Activated naive CD4-positive, alpha-beta T cell treated with anti-CD3 and anti-CD28 coated beads for 36 hours (primary cell): ENCODE measurements at regions of chr12 and their contacts with region 1.

Region 1: DNA sequence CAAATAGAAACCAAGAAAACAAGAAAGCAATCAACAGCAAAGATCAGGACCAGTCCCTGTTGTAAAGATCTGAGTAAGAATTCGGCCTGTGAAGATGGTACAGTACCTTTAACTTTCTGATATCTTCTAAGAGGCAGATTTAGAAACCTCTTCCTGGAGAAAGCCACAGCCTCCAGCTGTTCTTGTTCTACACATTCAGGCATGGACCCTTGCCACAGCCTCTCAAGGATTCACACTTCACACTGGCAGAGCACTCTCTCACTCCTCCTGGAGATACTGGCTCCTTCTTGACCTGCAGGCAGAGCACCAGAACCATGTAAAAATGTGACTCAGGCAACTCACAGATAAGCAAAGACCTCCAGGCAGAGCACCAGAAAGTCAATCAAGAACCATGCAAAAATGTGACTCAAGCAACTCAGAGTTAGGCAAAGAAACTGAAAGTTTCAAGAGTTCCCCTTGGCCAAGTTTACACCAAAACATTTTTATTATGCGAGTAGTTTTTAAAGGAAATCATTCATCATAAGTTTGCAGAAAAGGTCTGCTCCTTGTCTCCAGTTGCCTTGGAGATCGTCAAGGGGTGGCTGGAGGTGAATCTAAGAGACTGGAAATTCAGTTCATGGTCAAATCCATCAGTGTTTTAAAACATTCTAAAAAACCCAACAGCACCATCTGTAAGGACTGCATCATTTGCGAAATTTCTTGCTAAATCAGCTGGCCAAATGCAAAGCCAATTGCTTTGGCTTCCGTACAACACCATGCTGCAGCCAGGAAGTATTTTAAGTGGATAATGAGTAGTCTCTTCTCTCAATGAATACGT is 119.3 kb upstream of the MDM1 start:
- DNase-seq: peak; percentile 71
- H3K4me3 Mint-ChIP-seq: peak overlapping the region; percentile 45
- H3K27ac Mint-ChIP-seq: peak overlapping the region; percentile 96
- H3K4me1 Mint-ChIP-seq: peaks cover 91% of the 10 kb centered on the region
- H3K27me3 Mint-ChIP-seq: no peaks in the 10 kb centered on the region

Region 2: DNA sequence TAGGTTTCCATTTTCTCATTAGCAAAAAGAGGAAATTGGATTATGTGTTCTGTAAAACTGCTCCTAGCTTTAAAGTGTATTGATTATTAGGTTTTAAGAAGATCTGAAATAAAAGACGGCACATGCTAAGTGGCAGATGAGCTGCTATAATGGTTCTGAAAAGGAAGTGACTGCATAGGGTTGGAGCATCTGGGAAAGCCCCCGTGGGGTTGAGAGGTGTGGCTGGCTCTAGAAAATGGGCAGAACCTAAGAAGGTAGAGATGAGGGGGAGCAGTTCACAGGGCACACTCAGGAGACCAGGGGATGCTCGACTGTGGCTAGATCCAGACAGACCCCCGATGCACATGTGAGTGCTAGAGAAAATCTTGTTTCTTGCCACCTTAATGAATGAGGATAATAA is 460.3 kb before region 1 on chr12:
- CTCF ChIA-PET with region 1: no interaction called
- intact Hi-C with region 1: loop called (anchors 1 kb)
- DNase-seq: peak; percentile 74
- H3K4me3 Mint-ChIP-seq: peak overlapping the region; percentile 55
- H3K27ac Mint-ChIP-seq: peak overlapping the region; percentile 80
- H3K4me1 Mint-ChIP-seq: peaks cover 49% of the 10 kb centered on the region
- H3K27me3 Mint-ChIP-seq: peaks cover 2% of the 10 kb centered on the region

Region 3: DNA sequence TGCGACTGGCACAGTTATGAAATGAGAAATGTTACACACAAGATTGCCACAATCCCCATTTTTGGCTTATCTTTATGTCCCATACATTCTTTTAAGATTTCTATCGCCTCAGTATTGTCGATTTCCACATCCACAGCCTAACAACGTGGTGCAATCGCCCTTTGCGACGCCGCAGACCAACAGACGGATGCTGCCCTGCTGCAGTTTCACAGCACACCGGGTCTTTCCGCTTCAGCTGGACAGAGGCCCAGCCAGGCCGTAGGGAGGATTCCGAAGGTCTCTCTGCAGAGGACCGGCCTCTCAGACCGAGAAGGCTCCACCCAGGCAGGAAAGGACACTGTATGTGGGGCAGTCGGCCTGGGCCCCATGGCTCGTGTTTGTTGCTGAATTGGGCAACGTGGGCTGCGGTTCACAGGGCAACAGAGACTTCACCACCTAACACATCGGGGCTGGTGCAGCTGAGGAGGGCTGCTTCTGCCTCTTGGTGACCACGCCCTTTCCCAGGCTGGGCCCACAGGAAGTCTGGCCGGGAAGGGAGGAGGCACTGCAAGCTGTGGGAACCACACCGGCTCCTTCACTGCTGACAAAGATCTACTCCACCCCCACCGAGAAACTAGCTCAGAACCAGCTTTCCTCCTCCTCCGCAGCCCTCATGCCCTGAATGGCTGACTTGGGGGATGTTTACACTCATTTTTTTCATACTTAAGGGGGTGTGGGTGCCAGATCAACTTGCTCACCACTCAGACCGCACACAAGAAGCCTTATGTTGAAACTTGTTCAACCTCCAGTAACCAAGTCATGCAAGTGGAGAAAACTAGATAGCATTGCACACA is 86.4 kb before region 1 on chr12:
- CTCF ChIA-PET with region 1: no interaction called
- intact Hi-C with region 1: loop called (anchors 1 kb)
- DNase-seq: peak; percentile 90
- H3K4me3 Mint-ChIP-seq: peak overlapping the region; percentile 79
- H3K27ac Mint-ChIP-seq: peak overlapping the region; percentile 90
- H3K4me1 Mint-ChIP-seq: peaks cover 57% of the 10 kb centered on the region
- H3K27me3 Mint-ChIP-seq: no peaks in the 10 kb centered on the region

Region 4: GRCh38 chr12:68538726-68539614 is 87.5 kb after region 1 on chr12:
- CTCF ChIA-PET with region 1: interaction called, 3 read pairs
- intact Hi-C with region 1: loop called (anchors 1 kb)
- DNase-seq: peak; percentile 73
- H3K4me3 Mint-ChIP-seq: peak overlapping the region; percentile 56
- H3K27ac Mint-ChIP-seq: peak overlapping the region; percentile 79
- H3K4me1 Mint-ChIP-seq: peaks cover 53% of the 10 kb centered on the region
- H3K27me3 Mint-ChIP-seq: no peaks in the 10 kb centered on the region

Region 5: DNA sequence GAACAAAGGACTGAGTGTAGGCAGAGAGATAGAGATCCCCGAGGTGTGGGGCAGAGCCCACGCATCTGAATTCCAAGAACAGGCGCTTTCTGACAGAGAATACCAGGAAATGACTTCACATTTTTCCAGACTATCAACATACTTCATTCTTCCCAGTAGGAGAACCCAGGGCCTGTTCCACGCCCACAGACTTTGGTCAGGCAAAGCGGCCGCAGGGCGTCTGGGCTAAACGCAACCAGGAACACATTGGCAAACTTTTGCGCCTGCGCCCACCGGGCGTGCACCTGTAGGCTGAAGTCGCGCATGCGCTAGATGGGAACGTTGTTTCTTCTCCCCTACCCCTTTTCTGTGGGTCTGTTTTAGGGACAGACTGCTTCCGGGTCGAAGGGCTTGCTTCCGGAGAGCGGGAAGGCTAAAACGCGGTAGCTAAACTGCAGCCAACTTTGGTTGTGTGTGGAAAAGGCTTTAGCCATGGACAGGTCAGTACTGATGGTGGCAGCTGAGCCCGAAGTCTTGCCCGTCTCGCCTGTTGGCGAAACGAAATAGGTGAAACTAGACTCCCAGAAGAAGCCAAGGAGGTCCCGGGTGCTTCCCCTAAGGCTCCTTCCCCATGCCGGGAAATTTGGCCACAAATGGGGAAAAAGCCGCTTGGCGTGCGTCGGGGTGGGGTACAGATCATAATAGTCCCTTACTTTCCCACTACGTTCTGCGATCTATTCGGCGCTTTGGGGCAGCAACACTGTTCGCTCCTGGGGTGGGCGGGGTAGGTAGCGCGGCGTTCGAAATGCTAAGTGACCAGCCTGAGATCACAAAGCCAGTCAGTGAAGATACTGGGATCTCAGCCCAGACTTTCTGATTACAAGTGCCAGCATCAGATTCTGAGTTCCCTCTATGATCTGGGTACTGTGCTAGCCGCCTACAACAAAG is 235.4 kb after region 1 on chr12 and contains the start of gene NUP107:
- CTCF ChIA-PET with region 1: no interaction called
- intact Hi-C with region 1: loop called (anchors 2 kb)
- DNase-seq: peak; percentile 98
- H3K4me3 Mint-ChIP-seq: peak within 1 kb of the TSS; percentile 98
- H3K27ac Mint-ChIP-seq: peak within 1 kb of the TSS; percentile 96
- H3K4me1 Mint-ChIP-seq: peaks cover 39% of the 10 kb centered on the region
- H3K27me3 Mint-ChIP-seq: no peaks in the 10 kb centered on the region
- total RNA-seq, gene NUP107: 126 to 135 TPM

Region 6: DNA sequence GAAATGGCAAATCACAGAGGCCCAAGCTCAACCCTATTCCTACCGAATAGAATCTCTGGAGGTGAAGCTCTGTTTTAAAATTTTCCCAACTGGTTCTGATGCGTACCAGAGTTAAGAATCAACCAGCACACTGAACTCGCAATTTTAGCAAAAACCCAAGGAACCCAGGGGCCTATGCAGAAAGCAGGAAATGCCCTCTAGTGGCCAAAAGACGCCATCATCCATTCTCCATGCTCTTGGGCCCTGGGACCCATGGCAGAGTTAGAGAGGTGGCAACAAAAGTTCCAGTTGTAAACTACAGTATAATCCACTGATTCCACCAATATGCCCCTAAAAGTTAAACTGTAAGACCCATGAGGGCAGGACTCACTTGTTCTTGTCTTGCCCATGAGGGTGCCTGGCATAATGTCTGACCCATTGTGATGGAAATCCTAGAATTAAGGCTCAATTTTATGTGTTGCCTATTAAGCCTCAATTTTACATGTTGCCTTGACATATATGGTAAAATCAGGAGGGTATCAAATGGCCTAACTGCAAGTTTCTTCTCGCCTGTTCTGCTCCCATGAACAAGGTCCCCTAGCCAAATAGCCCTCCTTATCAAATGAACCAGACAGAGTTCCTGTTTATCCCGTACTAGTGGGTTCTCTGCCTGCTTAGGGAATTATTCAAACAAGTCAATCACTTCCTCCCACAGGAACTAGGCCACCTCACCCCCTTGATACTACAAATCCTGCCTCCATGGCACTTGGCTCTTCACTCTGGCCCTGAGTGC is 619.0 kb after region 1 on chr12:
- CTCF ChIA-PET with region 1: no interaction called
- intact Hi-C with region 1: loop called (anchors 1 kb)
- DNase-seq: peak; percentile 87
- H3K4me3 Mint-ChIP-seq: no peak overlapping the region
- H3K27ac Mint-ChIP-seq: no peak overlapping the region
- H3K4me1 Mint-ChIP-seq: peaks cover 38% of the 10 kb centered on the region
- H3K27me3 Mint-ChIP-seq: peaks cover 8% of the 10 kb centered on the region